CD4-positive, alpha-beta T cell (primary cell): ENCODE measurements at regions of chr1 and their contacts with region 1.

Region 1: GRCh38 chr1:206612129-206612876 is at the start of gene EIF2D:
- DNase-seq: peak; percentile 88 to 97 (median 94)
- ATAC-seq: peak; percentile 98
- H3K4me3 ChIP-seq: peak within 1 kb of the TSS; percentile 88
- H3K4me3 Mint-ChIP-seq: peak within 1 kb of the TSS; percentile 90
- H3K27ac ChIP-seq: peak within 1 kb of the TSS; percentile 51 to 78
- H3K27ac Mint-ChIP-seq: peak within 1 kb of the TSS; percentile 83
- H3K4me1 ChIP-seq: peaks cover 18% of the 10 kb centered on the region
- H3K4me1 Mint-ChIP-seq: peaks cover 20% of the 10 kb centered on the region
- H3K27me3 ChIP-seq: no peaks in the 10 kb centered on the region
- H3K27me3 Mint-ChIP-seq: no peaks in the 10 kb centered on the region
- CTCF ChIP-seq: peak; percentile 95
- total RNA-seq, gene EIF2D: 48.9 to 51.6 TPM

Region 2: GRCh38 chr1:205121660-205122488 is 1490.4 kb before region 1 on chr1 and contains the start of gene RBBP5:
- CTCF ChIA-PET with region 1: no interaction called
- POLR2A ChIA-PET with region 1: no interaction called
- intact Hi-C with region 1: loop called in 1 of 2 experiments (anchors 5 kb)
- DNase-seq: peak; percentile 93 to 99 (median 95)
- ATAC-seq: peak; percentile 91
- H3K4me3 ChIP-seq: peak within 1 kb of the TSS; percentile 79
- H3K4me3 Mint-ChIP-seq: peak within 1 kb of the TSS; percentile 94
- H3K27ac ChIP-seq: peak within 1 kb of the TSS; percentile 90 to 94
- H3K27ac Mint-ChIP-seq: peak within 1 kb of the TSS; percentile 98
- H3K4me1 ChIP-seq: peaks cover 32% of the 10 kb centered on the region
- H3K4me1 Mint-ChIP-seq: peaks cover 46% of the 10 kb centered on the region
- H3K27me3 ChIP-seq: no peaks in the 10 kb centered on the region
- H3K27me3 Mint-ChIP-seq: no peaks in the 10 kb centered on the region
- CTCF ChIP-seq: peak; percentile 57
- total RNA-seq, gene RBBP5: 14.8 to 15.6 TPM

Region 3: GRCh38 chr1:206551986-206552326 is 60.3 kb before region 1 on chr1:
- CTCF ChIA-PET with region 1: interaction called, 11 read pairs
- POLR2A ChIA-PET with region 1: interaction called, 8 read pairs
- intact Hi-C with region 1: loop called in 1 of 2 experiments (anchors 1 kb)
- DNase-seq: peak; percentile 53 to 94 (median 70)
- ATAC-seq: peak; percentile 90
- H3K4me3 ChIP-seq: no peak overlapping the region
- H3K4me3 Mint-ChIP-seq: peak overlapping the region; percentile 80
- H3K27ac ChIP-seq: peak overlapping the region; percentile 72 to 81
- H3K27ac Mint-ChIP-seq: peak overlapping the region; percentile 86
- H3K4me1 ChIP-seq: peaks cover 64% of the 10 kb centered on the region
- H3K4me1 Mint-ChIP-seq: peaks cover 63% of the 10 kb centered on the region
- H3K27me3 ChIP-seq: no peaks in the 10 kb centered on the region
- H3K27me3 Mint-ChIP-seq: no peaks in the 10 kb centered on the region
- CTCF ChIP-seq: peak; percentile 39

Region 4: GRCh38 chr1:206583707-206584648 is 28.3 kb before region 1 on chr1:
- CTCF ChIA-PET with region 1: interaction called, 15 read pairs
- POLR2A ChIA-PET with region 1: interaction called, 4 read pairs
- intact Hi-C with region 1: no loop called
- DNase-seq: peak; percentile 77 to 94 (median 86)
- ATAC-seq: peak; percentile 33
- H3K4me3 ChIP-seq: no peak overlapping the region
- H3K4me3 Mint-ChIP-seq: peak overlapping the region; percentile 84
- H3K27ac ChIP-seq: peak overlapping the region; percentile 93 to 95
- H3K27ac Mint-ChIP-seq: peak overlapping the region; percentile 86
- H3K4me1 ChIP-seq: peaks cover 78% of the 10 kb centered on the region
- H3K4me1 Mint-ChIP-seq: peaks cover 66% of the 10 kb centered on the region
- H3K27me3 ChIP-seq: no peaks in the 10 kb centered on the region
- H3K27me3 Mint-ChIP-seq: no peaks in the 10 kb centered on the region
- CTCF ChIP-seq: peak; percentile 88

Region 5: DNA sequence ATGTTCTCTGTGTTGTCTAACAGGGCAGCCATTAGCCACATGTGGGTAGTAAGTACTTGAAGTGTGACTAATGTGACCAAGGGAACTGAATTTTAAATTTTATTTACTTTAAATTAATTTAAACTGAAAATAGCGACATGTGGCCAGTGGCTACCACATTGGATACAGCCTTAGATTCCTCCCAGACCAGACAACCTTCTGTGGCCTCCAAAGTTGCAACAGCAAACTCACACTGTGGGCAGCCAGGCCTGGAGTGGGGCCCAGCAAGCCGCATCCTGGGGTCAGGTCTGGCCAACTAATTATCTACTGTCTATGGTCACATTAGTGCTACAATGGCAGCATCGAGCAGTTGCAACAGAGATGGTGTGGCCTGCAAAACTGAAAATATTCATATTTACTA is 11.8 kb before region 1 on chr1:
- CTCF ChIA-PET with region 1: interaction called, 10 read pairs
- POLR2A ChIA-PET with region 1: interaction called, 3 read pairs
- intact Hi-C with region 1: no loop called
- DNase-seq: no peak
- ATAC-seq: no peak
- H3K4me3 ChIP-seq: no peak overlapping the region
- H3K4me3 Mint-ChIP-seq: no peak overlapping the region
- H3K27ac ChIP-seq: no peak overlapping the region
- H3K27ac Mint-ChIP-seq: no peak overlapping the region
- H3K4me1 ChIP-seq: no peaks in the 10 kb centered on the region
- H3K4me1 Mint-ChIP-seq: no peaks in the 10 kb centered on the region
- H3K27me3 ChIP-seq: no peaks in the 10 kb centered on the region
- H3K27me3 Mint-ChIP-seq: no peaks in the 10 kb centered on the region
- CTCF ChIP-seq: no peak

Region 6: GRCh38 chr1:206663832-206664652 is 51.7 kb after region 1 on chr1:
- CTCF ChIA-PET with region 1: interaction called, 16 read pairs
- POLR2A ChIA-PET with region 1: no interaction called
- intact Hi-C with region 1: loop called in 1 of 2 experiments (anchors 1 kb)
- DNase-seq: peak; percentile 53 to 85 (median 64)
- ATAC-seq: peak; percentile 91
- H3K4me3 ChIP-seq: no peak overlapping the region
- H3K4me3 Mint-ChIP-seq: no peak overlapping the region
- H3K27ac ChIP-seq: no peak overlapping the region
- H3K27ac Mint-ChIP-seq: no peak overlapping the region
- H3K4me1 ChIP-seq: peaks cover 20% of the 10 kb centered on the region
- H3K4me1 Mint-ChIP-seq: peaks cover 4% of the 10 kb centered on the region
- H3K27me3 ChIP-seq: peaks cover 16 to 20% of the 10 kb centered on the region in 2 experiments
- H3K27me3 Mint-ChIP-seq: peaks cover 31% of the 10 kb centered on the region
- CTCF ChIP-seq: peak; percentile 93

Region 7: GRCh38 chr1:206982216-206982615 is 369.9 kb after region 1 on chr1:
- CTCF ChIA-PET with region 1: interaction called, 9 read pairs
- POLR2A ChIA-PET with region 1: no interaction called
- intact Hi-C with region 1: loop called in 1 of 2 experiments (anchors 5 kb)
- DNase-seq: peak; percentile 48 to 77 (median 59)
- ATAC-seq: peak; percentile 81
- H3K4me3 ChIP-seq: no peak overlapping the region
- H3K4me3 Mint-ChIP-seq: no peak overlapping the region
- H3K27ac ChIP-seq: no peak overlapping the region
- H3K27ac Mint-ChIP-seq: no peak overlapping the region
- H3K4me1 ChIP-seq: no peaks in the 10 kb centered on the region
- H3K4me1 Mint-ChIP-seq: no peaks in the 10 kb centered on the region
- H3K27me3 ChIP-seq: peaks cover 6 to 12% of the 10 kb centered on the region in 2 experiments
- H3K27me3 Mint-ChIP-seq: peaks cover 18% of the 10 kb centered on the region
- CTCF ChIP-seq: peak; percentile 88